ENCODE measurements at regions of chr3 and their contacts with region 1.

Region 1: DNA sequence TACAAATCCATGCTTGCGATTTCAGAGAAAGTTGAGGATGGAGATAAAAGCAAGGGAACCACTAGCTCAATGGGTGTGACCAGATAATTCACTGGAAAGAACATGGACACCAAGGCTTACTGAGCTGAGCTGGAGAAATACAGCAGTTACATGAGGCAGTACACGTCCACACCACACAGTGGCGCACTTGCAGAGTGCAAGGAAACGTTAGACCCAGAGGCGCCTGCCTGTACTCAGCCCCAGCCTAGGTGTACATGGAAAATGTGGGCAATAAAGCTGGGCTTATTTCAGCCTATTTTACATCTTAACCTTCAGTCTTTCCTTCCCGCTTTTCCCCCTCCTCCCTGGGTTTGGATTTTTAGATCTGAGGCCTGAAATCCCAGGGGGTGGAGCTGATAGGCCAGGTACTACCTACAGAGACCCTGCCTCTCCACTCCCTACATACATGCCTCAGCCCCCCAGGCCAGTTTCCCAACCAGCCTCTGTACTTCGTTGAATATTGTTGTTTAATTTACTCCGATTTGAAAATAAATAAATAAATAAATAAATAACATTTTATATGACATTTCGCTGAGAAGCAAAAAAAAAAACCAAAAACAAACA is 60.1 kb downstream of the PCOLCE2 start:
- DNase-seq: no peak
- H3K4me3 ChIP-seq: no peak overlapping the region
- H3K27me3 ChIP-seq: peaks cover 4% of the 10 kb centered on the region
- CTCF ChIP-seq: peak; percentile 89

Region 2: GRCh38 chr3:142586803-142587406 is 241.9 kb before region 1 on chr3:
- CTCF ChIA-PET with region 1: interaction called, 22 read pairs
- POLR2A ChIA-PET with region 1: no interaction called
- DNase-seq: no peak
- H3K4me3 ChIP-seq: no peak overlapping the region
- H3K27me3 ChIP-seq: no peaks in the 10 kb centered on the region; the same call in 1 of the 2 replicates
- CTCF ChIP-seq: peak; percentile 59

Region 3: GRCh38 chr3:142817897-142818296 is 10.9 kb before region 1 on chr3:
- CTCF ChIA-PET with region 1: interaction called, 63 read pairs
- POLR2A ChIA-PET with region 1: no interaction called
- DNase-seq: no peak
- H3K4me3 ChIP-seq: no peak overlapping the region
- H3K27me3 ChIP-seq: no peaks in the 10 kb centered on the region
- CTCF ChIP-seq: no peak

Region 4: GRCh38 chr3:142904639-142905436 is 76.0 kb after region 1 on chr3:
- CTCF ChIA-PET with region 1: interaction called, 11 read pairs
- POLR2A ChIA-PET with region 1: no interaction called
- DNase-seq: no peak
- H3K4me3 ChIP-seq: no peak overlapping the region
- H3K27me3 ChIP-seq: no peaks in the 10 kb centered on the region
- CTCF ChIP-seq: no peak

Region 5: DNA sequence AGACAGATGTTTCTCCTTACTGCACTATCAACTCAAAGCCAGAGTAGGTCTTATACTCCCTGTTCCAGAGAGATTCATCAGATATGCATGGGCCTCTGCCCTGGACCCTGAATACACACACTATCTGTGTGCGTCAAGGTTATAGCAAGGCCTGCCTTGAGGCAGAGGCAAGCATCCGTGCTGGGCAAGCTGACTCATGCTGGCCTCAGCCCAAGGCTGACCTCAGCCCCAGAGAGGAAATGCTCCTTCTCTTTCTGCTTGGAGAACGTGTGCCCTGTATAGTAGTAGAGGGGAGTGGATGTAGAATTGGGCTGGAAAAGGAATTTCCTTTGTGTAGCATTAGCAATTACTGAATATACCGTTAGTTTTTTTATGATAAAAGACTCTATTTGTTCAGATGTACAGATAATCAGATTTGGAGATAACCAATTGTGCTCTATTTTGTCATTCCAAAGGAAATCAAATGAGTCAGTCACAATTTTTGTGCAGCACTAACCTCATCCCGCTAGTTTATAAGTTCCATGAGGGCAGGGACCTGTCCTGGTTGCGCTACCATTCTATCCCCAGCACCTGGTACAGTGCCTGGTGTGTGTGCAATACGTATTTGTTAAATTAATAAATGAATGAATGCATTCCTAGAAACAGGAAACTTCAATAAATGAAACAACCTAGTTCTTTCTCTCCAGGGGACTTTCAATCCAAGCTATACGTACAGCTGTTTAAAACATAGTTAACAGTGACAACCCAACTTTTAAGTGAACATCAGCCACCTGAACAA is 148.0 kb after region 1 on chr3:
- CTCF ChIA-PET with region 1: interaction called, 29 read pairs
- POLR2A ChIA-PET with region 1: no interaction called
- DNase-seq: peak; percentile 67
- H3K4me3 ChIP-seq: no peak overlapping the region
- H3K27me3 ChIP-seq: peaks cover 2% of the 10 kb centered on the region; the same call in 1 of the 2 replicates
- CTCF ChIP-seq: no peak

Region 6: DNA sequence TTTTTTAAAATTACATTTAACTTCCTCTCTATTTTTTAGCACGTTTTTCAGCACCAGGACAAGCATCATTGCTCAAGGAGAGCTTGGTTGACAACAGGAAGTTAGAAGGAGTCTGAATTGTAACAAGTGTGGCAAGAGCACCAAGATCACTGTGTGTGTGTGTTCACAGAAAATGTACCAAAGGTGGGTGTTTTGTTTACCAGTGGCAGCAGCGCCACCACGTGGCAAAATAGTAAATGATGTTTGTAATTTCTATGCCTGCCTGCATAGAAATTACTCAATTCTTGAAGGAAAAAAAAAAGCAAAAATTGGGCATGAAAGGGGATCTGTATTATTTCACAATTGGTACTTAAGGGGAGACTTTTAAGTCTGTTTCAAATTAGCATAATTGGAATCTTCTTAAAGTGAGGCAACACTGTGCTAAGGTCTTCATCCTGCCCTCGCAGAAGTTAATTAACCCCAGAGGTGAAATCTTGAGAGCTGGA is 165.2 kb after region 1 on chr3:
- CTCF ChIA-PET with region 1: interaction called, 160 read pairs
- POLR2A ChIA-PET with region 1: no interaction called
- DNase-seq: no peak
- H3K4me3 ChIP-seq: no peak overlapping the region
- H3K27me3 ChIP-seq: no peaks in the 10 kb centered on the region
- CTCF ChIP-seq: peak; percentile 68